SK-N-SH (cell line): ENCODE measurements at regions of chr1 and their contacts with region 1.

Region 1: GRCh38 chr1:54944610-54945544 is 35.6 kb upstream of the TMEM61 start:
- DNase-seq: peak; percentile 72
- H3K4me3 ChIP-seq: no peak overlapping the region
- H3K27ac ChIP-seq: no peak overlapping the region
- H3K4me1 ChIP-seq: peaks cover 0 to under 1% of the 10 kb centered on the region in 2 experiments; a peak in 1 of 4 replicates
- H3K27me3 ChIP-seq: no peaks in the 10 kb centered on the region
- CTCF ChIP-seq: peak; percentile 91
- EP300 ChIP-seq: no peak
- RAD21 ChIP-seq: peak; percentile 82

Region 2: DNA sequence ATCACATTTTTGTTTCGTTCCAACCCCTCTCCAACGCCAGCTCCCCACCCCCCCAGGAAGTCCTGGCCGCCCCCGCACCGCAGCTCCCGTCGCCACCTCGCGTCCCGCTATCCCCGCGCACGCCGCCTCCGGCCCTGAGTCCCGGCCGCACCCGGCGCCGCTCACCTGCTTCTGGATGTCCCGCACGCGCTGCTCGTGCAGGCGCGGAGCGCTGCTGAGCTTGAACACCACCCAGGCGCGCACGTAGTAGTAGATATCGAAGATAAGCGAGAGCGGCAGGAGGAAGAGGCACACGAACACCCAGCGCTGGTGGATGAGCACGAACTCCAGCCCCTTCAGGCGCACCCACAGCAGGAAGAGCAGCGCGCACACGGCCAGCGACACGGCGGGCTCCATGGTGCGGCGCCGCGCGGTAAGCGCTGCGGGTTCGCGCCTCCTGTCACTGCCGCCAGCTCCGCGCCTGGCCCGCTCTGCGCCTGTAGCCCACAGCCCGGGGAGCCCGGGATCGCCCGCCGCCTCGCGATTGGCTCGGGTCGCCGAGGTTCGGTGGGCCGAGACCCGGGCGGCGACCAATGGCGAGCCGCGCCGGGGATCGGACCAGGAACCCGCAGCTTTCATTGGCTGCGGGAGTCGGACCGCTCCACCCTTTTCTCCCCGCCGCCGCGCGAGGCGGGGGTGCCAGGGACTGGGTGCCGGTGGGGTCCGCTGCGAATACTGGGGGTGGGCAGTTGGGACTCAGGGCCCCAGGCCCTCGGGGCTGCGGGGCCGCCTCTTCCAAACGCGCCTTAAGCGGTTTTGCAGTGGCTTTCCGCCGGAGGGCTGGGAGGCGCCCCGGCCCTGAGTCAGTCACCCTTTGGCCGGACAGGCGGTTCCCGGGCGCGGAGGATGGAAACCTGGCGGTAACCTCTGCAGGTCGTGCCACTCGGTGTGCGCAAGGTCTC is 57.9 kb before region 1 on chr1 and contains the start of gene DHCR24:
- CTCF ChIA-PET with region 1: interaction called, 12 read pairs
- POLR2A ChIA-PET with region 1: no interaction called
- DNase-seq: peak; percentile 99
- H3K4me3 ChIP-seq: peak within 1 kb of the TSS; percentile 77 to 78
- H3K27ac ChIP-seq: peak within 1 kb of the TSS in 1 of 2 experiments; percentile 55; a peak in 1 of 4 replicates
- H3K4me1 ChIP-seq: peaks cover 0 to 28% of the 10 kb centered on the region in 2 experiments; a peak in 1 of 4 replicates
- H3K27me3 ChIP-seq: no peaks in the 10 kb centered on the region
- CTCF ChIP-seq: no peak
- EP300 ChIP-seq: no peak
- RAD21 ChIP-seq: no peak
- polyA plus RNA-seq, gene DHCR24: 4.3 and 7.1 TPM in 2 replicates

Region 3: DNA sequence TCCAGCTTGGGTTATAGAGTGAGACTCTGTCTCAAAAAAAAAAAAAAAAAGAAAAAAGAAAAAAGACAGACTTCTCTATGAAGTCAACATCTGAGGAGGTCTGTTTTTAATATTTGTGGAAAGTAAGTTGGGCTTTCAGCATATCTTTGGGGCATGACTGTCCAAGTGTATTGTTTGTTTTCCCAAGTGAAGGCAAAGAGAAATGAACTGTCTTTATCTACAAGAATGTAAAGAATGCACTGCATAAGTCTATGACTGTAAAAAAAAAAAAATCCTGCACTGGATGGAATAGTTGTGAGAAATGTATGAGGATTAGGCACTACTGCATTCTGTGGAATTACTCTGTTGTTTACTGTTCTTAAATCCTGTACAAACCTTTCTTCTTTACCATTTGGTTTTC is 10.0 kb before region 1 on chr1:
- CTCF ChIA-PET with region 1: interaction called, 36 read pairs
- POLR2A ChIA-PET with region 1: no interaction called
- DNase-seq: no peak
- H3K4me3 ChIP-seq: no peak overlapping the region
- H3K27ac ChIP-seq: peak overlapping the region; percentile 1 to 91; a peak in 3 of 4 replicates
- H3K4me1 ChIP-seq: peaks cover 0 to 38% of the 10 kb centered on the region in 2 experiments; a peak in 3 of 4 replicates
- H3K27me3 ChIP-seq: no peaks in the 10 kb centered on the region
- CTCF ChIP-seq: no peak
- EP300 ChIP-seq: peak in 1 of 2 experiments; percentile 45; a peak in 1 of 4 replicates
- RAD21 ChIP-seq: no peak

Region 4: GRCh38 chr1:54973205-54973921 is 28.5 kb after region 1 on chr1:
- CTCF ChIA-PET with region 1: interaction called, 42 read pairs
- POLR2A ChIA-PET with region 1: no interaction called
- DNase-seq: peak; percentile 65
- H3K4me3 ChIP-seq: no peak overlapping the region
- H3K27ac ChIP-seq: no peak overlapping the region
- H3K4me1 ChIP-seq: no peaks in the 10 kb centered on the region; a peak in 1 of 4 replicates
- H3K27me3 ChIP-seq: no peaks in the 10 kb centered on the region
- CTCF ChIP-seq: peak; percentile 43
- EP300 ChIP-seq: no peak
- RAD21 ChIP-seq: peak; percentile 61

Region 5: GRCh38 chr1:54987919-54988705 is 43.2 kb after region 1 on chr1:
- CTCF ChIA-PET with region 1: interaction called, 123 read pairs
- POLR2A ChIA-PET with region 1: interaction called, 3 read pairs
- DNase-seq: peak; percentile 84
- H3K4me3 ChIP-seq: no peak overlapping the region
- H3K27ac ChIP-seq: no peak overlapping the region; a peak in 1 of 4 replicates
- H3K4me1 ChIP-seq: peaks cover 0 to 11% of the 10 kb centered on the region in 2 experiments; a peak in 1 of 4 replicates
- H3K27me3 ChIP-seq: no peaks in the 10 kb centered on the region; the same call in 1 of the 2 replicates
- CTCF ChIP-seq: no peak
- EP300 ChIP-seq: no peak
- RAD21 ChIP-seq: no peak

Region 6: DNA sequence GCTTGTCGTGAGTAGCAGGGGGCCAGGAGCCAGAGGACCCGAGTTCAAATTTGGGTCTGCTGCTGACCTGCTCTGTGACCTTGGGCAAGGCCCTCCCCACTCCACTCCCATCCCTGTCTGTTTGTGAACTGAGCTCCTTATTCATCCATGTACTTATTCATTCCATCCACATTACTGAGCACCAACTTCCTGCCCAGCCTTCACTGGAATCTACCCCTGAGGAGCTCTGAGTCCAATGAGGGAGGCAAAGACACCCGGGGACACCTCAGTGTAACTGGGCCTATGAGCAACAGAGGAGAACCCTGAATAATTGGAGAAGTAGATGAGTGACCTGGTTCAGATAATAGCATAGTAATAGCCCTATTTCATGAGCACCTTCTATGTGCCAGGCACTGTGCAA is 62.7 kb after region 1 on chr1:
- CTCF ChIA-PET with region 1: interaction called, 390 read pairs
- POLR2A ChIA-PET with region 1: no interaction called
- DNase-seq: no peak
- H3K4me3 ChIP-seq: no peak overlapping the region
- H3K27ac ChIP-seq: 0 out of 4 replicates have a peak overlapping the region, but pooled peaks of 1 of the 2 experiments have one; percentile 3
- H3K4me1 ChIP-seq: peaks cover 0 to 4% of the 10 kb centered on the region in 2 experiments; a peak in 1 of 4 replicates
- H3K27me3 ChIP-seq: no peaks in the 10 kb centered on the region
- CTCF ChIP-seq: no peak
- EP300 ChIP-seq: no peak
- RAD21 ChIP-seq: no peak

Region 7: DNA sequence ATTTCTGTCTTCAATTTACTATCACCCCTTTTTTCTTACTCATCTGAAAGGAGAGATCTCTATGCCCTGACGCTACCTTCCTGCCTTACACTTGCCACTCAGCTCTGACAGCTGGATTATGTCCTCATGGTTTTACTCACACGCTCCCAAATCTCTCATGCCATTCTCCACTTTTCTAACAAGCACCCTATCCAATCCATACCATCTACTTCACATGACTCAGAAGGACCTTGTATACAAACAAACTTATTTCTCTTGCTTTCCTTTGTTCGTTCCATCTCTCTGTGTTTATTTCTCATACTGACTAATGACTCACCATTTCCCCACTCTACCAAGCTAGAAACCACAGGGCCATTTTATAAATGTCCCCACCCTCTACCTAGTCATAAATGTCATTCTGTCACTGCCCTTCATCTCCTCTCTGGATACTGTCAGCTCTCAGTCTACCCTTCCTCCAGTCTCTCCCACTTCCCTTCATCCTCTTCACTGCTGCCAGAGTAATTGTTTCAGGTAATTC is 183.0 kb after region 1 on chr1:
- CTCF ChIA-PET with region 1: no interaction called
- POLR2A ChIA-PET with region 1: no interaction called
- DNase-seq: no peak
- H3K4me3 ChIP-seq: no peak overlapping the region
- H3K27ac ChIP-seq: no peak overlapping the region
- H3K4me1 ChIP-seq: no peaks in the 10 kb centered on the region
- H3K27me3 ChIP-seq: no peaks in the 10 kb centered on the region
- CTCF ChIP-seq: no peak
- EP300 ChIP-seq: no peak
- RAD21 ChIP-seq: no peak